ENCODE measurements at regions of chr6 and their contacts with region 1.

Region 1: GRCh38 chr6:139323511-139324300 is 31.9 kb upstream of the TXLNB start:
- DNase-seq: no peak
- ATAC-seq: peak; percentile 42
- H3K4me3 ChIP-seq: no peak overlapping the region
- H3K27ac ChIP-seq: peak overlapping the region; percentile 34; the same call in 1 of the 2 replicates
- H3K4me1 ChIP-seq: peaks cover 27% of the 10 kb centered on the region
- H3K27me3 ChIP-seq: no peaks in the 10 kb centered on the region
- CTCF ChIP-seq: no peak
- EP300 ChIP-seq: 0 out of 4 replicates have a peak, but pooled peaks of 1 of the 2 experiments have one; percentile 38
- POLR2A ChIP-seq: no peak
- RAD21 ChIP-seq: no peak

Region 2: DNA sequence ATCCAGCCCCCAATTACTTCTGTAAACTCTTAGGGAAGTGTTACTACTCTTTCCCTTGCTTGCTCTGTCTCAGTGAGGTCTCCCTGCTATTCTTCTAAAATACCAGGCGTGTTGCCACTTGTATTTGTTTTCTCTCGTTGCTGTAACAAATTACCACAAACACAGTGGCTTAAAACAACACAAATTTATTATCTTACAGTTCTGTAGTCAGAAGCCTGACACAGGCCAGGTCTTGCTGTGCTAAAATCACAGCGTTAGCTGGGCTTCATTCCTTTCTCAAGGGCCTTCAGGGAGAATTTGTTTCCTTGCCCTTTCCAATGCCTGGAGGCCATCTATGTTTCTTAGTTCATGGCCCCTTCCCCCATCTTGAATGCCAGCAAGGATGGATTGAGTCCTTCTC is 128.9 kb before region 1 on chr6:
- CTCF ChIA-PET with region 1: no interaction called
- POLR2A ChIA-PET with region 1: no interaction called
- RAD21 ChIA-PET with region 1: no interaction called
- SMC1A ChIA-PET with region 1: no interaction called
- in situ Hi-C with region 1: no loop called
- intact Hi-C with region 1: no loop called
- DNase-seq: no peak
- ATAC-seq: no peak
- H3K4me3 ChIP-seq: no peak overlapping the region
- H3K27ac ChIP-seq: no peak overlapping the region
- H3K4me1 ChIP-seq: no peaks in the 10 kb centered on the region
- H3K27me3 ChIP-seq: no peaks in the 10 kb centered on the region
- CTCF ChIP-seq: no peak
- EP300 ChIP-seq: no peak
- POLR2A ChIP-seq: no peak
- RAD21 ChIP-seq: no peak

Region 3: GRCh38 chr6:139271056-139271455 is 52.6 kb before region 1 on chr6:
- CTCF ChIA-PET with region 1: interaction called, 3 read pairs
- POLR2A ChIA-PET with region 1: interaction called, 9 read pairs
- RAD21 ChIA-PET with region 1: interaction called, 15 read pairs
- SMC1A ChIA-PET with region 1: interaction called, 19 read pairs
- in situ Hi-C with region 1: no loop called
- intact Hi-C with region 1: no loop called
- DNase-seq: no peak
- ATAC-seq: peak; percentile 92
- H3K4me3 ChIP-seq: 0 out of 2 replicates have a peak overlapping the region, but pooled peaks have one; percentile 18
- H3K27ac ChIP-seq: peak overlapping the region; percentile 14; the same call in 1 of the 2 replicates
- H3K4me1 ChIP-seq: peaks cover 6% of the 10 kb centered on the region
- H3K27me3 ChIP-seq: no peaks in the 10 kb centered on the region
- CTCF ChIP-seq: no peak
- EP300 ChIP-seq: 0 out of 4 replicates have a peak, but pooled peaks of 1 of the 2 experiments have one; percentile 31
- POLR2A ChIP-seq: no peak
- RAD21 ChIP-seq: no peak

Region 4: DNA sequence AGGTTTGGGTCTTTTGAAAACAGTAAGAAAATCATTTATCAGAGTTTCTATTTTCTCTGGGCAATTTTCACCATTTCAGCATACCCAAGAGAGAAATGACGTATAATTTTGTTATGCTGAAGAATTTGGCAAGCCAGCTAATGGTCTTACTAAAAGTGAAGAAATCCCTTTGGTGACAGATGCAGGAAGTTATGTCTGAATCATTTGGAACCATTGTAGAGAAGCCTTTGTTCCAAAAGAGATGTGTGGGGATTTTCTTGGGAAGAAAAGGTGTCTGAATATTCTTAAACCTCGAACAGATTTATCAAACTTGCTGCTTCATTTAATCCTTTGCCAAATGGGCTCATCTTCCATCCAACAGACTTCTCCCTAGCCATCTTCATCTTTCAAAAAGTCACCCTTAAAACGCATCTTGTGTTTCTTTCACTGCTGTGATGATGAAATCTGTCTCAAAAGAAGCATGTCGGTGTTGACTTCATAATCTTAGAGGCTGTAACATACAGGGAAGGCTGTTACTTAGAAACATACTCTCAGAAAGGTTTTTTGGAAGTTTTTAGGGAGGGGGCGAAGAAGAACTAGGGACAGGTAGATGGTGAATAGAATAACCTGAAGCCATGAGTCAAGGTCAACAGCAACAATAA is 11.2 kb after region 1 on chr6:
- CTCF ChIA-PET with region 1: interaction called, 12 read pairs
- POLR2A ChIA-PET with region 1: interaction called, 17 read pairs
- RAD21 ChIA-PET with region 1: interaction called, 11 read pairs
- SMC1A ChIA-PET with region 1: interaction called, 50 read pairs
- in situ Hi-C with region 1: no loop called
- intact Hi-C with region 1: no loop called
- DNase-seq: no peak
- ATAC-seq: no peak
- H3K4me3 ChIP-seq: no peak overlapping the region
- H3K27ac ChIP-seq: no peak overlapping the region
- H3K4me1 ChIP-seq: peaks cover 7% of the 10 kb centered on the region; the same call in 1 of the 2 replicates
- H3K27me3 ChIP-seq: no peaks in the 10 kb centered on the region
- CTCF ChIP-seq: no peak
- EP300 ChIP-seq: no peak
- POLR2A ChIP-seq: no peak
- RAD21 ChIP-seq: no peak

Measured in GM12878 (cell line).